PC-9 (cell line): ENCODE measurements at regions of chr7 and their contacts with region 1.

Region 1: GRCh38 chr7:44838751-44839150 is 9.1 kb downstream of the H2AZ2 start:
- DNase-seq: no peak
- H3K4me3 ChIP-seq: no peak overlapping the region
- H3K27ac ChIP-seq: no peak overlapping the region
- H3K4me1 ChIP-seq: no peaks in the 10 kb centered on the region
- H3K27me3 ChIP-seq: no peaks in the 10 kb centered on the region
- CTCF ChIP-seq: no peak

Region 2: GRCh38 chr7:44633254-44634186 is 205.2 kb before region 1 on chr7:
- CTCF ChIA-PET with region 1: no interaction called
- POLR2A ChIA-PET with region 1: no interaction called
- intact Hi-C with region 1: no loop called
- DNase-seq: peak; percentile 57 to 58
- H3K4me3 ChIP-seq: no peak overlapping the region
- H3K27ac ChIP-seq: peak overlapping the region; percentile 58
- H3K4me1 ChIP-seq: peaks cover 56% of the 10 kb centered on the region
- H3K27me3 ChIP-seq: no peaks in the 10 kb centered on the region
- CTCF ChIP-seq: no peak

Region 3: DNA sequence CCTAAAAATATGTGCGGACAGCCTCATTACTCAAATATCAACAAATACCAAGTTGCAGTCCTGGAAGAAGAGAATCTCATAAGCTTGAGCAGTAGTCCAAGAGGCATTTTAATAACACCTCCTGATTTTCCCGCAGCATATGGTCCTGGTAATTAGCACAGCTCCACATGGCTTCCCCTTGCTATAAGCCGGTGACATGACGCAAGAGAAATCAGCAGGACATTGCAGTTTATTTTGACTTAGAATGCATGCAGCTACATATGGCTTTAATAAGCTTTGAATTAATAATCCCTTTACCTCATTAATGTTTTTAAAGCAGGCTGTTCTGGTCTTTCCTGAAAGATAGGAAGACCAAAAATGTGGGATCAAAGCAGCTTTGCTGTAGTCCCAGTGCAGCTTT is 456.5 kb after region 1 on chr7:
- CTCF ChIA-PET with region 1: no interaction called
- POLR2A ChIA-PET with region 1: no interaction called
- intact Hi-C with region 1: no loop called
- DNase-seq: no peak
- H3K4me3 ChIP-seq: no peak overlapping the region
- H3K27ac ChIP-seq: no peak overlapping the region
- H3K4me1 ChIP-seq: no peaks in the 10 kb centered on the region
- H3K27me3 ChIP-seq: peaks cover 85% of the 10 kb centered on the region
- CTCF ChIP-seq: no peak

Region 4: GRCh38 chr7:45363669-45364068 is 524.9 kb after region 1 on chr7:
- CTCF ChIA-PET with region 1: no interaction called
- POLR2A ChIA-PET with region 1: interaction called, 11 read pairs
- intact Hi-C with region 1: no loop called
- DNase-seq: no peak
- H3K4me3 ChIP-seq: no peak overlapping the region
- H3K27ac ChIP-seq: no peak overlapping the region
- H3K4me1 ChIP-seq: no peaks in the 10 kb centered on the region
- H3K27me3 ChIP-seq: peaks cover 83% of the 10 kb centered on the region
- CTCF ChIP-seq: no peak